IMR-90 (cell line): ENCODE measurements at regions of chr1 and their contacts with region 1.

Region 1: GRCh38 chr1:57331620-57332019 is 92.2 kb downstream of the DAB1 start:
- DNase-seq: no peak
- ATAC-seq: no peak
- H3K4me3 ChIP-seq: no peak overlapping the region
- H3K27ac ChIP-seq: no peak overlapping the region
- H3K4me1 ChIP-seq: no peaks in the 10 kb centered on the region
- H3K27me3 ChIP-seq: no peaks in the 10 kb centered on the region
- CTCF ChIP-seq: no peak
- POLR2A ChIP-seq: no peak
- RAD21 ChIP-seq: no peak

Region 2: GRCh38 chr1:57362480-57362879 is 30.9 kb after region 1 on chr1:
- CTCF ChIA-PET with region 1: no interaction called
- POLR2A ChIA-PET with region 1: no interaction called
- dilution Hi-C with region 1: no loop called
- in situ Hi-C with region 1: no loop called
- intact Hi-C with region 1: loop called (anchors 2 kb)
- DNase-seq: no peak
- ATAC-seq: no peak
- H3K4me3 ChIP-seq: no peak overlapping the region
- H3K27ac ChIP-seq: no peak overlapping the region
- H3K4me1 ChIP-seq: no peaks in the 10 kb centered on the region; the same call in 1 of the 2 replicates
- H3K27me3 ChIP-seq: no peaks in the 10 kb centered on the region
- CTCF ChIP-seq: no peak
- POLR2A ChIP-seq: no peak
- RAD21 ChIP-seq: no peak